CD4-positive, alpha-beta T cell (primary cell): ENCODE measurements at regions of chr15 and their contacts with region 1.

Region 1: GRCh38 chr15:74127260-74127953 is 3.0 kb upstream of the ISLR2 start:
- DNase-seq: peak; percentile 67 to 88 (median 78)
- ATAC-seq: peak; percentile 92
- H3K4me3 ChIP-seq: peak overlapping the region; percentile 7
- H3K4me3 Mint-ChIP-seq: peak overlapping the region; percentile 48
- H3K27ac ChIP-seq: no peak overlapping the region
- H3K27ac Mint-ChIP-seq: no peak overlapping the region
- H3K4me1 ChIP-seq: peaks cover 26% of the 10 kb centered on the region
- H3K4me1 Mint-ChIP-seq: peaks cover 25% of the 10 kb centered on the region
- H3K27me3 ChIP-seq: peaks cover 59 to 64% of the 10 kb centered on the region in 2 experiments
- H3K27me3 Mint-ChIP-seq: peaks cover 95% of the 10 kb centered on the region
- CTCF ChIP-seq: peak; percentile 96

Region 2: GRCh38 chr15:74179341-74179841 is 52.0 kb after region 1 on chr15:
- CTCF ChIA-PET with region 1: no interaction called
- POLR2A ChIA-PET with region 1: no interaction called
- intact Hi-C with region 1: no loop called
- DNase-seq: no peak
- ATAC-seq: no peak
- H3K4me3 ChIP-seq: no peak overlapping the region
- H3K4me3 Mint-ChIP-seq: no peak overlapping the region
- H3K27ac ChIP-seq: no peak overlapping the region
- H3K27ac Mint-ChIP-seq: no peak overlapping the region
- H3K4me1 ChIP-seq: no peaks in the 10 kb centered on the region
- H3K4me1 Mint-ChIP-seq: no peaks in the 10 kb centered on the region
- H3K27me3 ChIP-seq: no peaks in the 10 kb centered on the region
- H3K27me3 Mint-ChIP-seq: no peaks in the 10 kb centered on the region
- CTCF ChIP-seq: no peak

Region 3: GRCh38 chr15:74196179-74196590 is 68.8 kb after region 1 on chr15:
- CTCF ChIA-PET with region 1: no interaction called
- POLR2A ChIA-PET with region 1: no interaction called
- intact Hi-C with region 1: no loop called
- DNase-seq: no peak
- ATAC-seq: no peak
- H3K4me3 ChIP-seq: no peak overlapping the region
- H3K4me3 Mint-ChIP-seq: no peak overlapping the region
- H3K27ac ChIP-seq: no peak overlapping the region
- H3K27ac Mint-ChIP-seq: no peak overlapping the region
- H3K4me1 ChIP-seq: no peaks in the 10 kb centered on the region
- H3K4me1 Mint-ChIP-seq: no peaks in the 10 kb centered on the region
- H3K27me3 ChIP-seq: no peaks in the 10 kb centered on the region
- H3K27me3 Mint-ChIP-seq: peaks cover 4% of the 10 kb centered on the region
- CTCF ChIP-seq: no peak

Region 4: DNA sequence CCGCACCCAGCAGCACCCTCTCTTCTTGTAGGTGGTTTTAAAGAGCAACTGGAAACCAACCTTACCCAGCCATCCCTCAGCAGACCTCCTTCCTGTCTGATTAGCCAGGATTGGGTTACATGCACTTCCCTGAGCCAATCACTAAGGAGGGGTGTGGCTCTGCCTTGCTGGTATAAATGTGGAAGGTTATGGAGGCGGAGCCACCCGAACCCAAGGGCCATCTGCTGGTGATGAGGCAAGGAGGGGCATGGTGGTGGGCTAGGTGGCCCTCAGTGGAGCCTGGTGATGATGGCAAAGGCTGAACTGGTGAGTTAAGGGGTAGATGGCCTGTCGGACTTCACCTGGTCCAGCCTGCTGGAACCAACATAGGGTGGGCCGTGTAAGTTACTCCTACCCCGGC is 148.6 kb after region 1 on chr15:
- CTCF ChIA-PET with region 1: no interaction called
- POLR2A ChIA-PET with region 1: no interaction called
- intact Hi-C with region 1: no loop called
- DNase-seq: no peak
- ATAC-seq: no peak
- H3K4me3 ChIP-seq: no peak overlapping the region
- H3K4me3 Mint-ChIP-seq: no peak overlapping the region
- H3K27ac ChIP-seq: no peak overlapping the region
- H3K27ac Mint-ChIP-seq: no peak overlapping the region
- H3K4me1 ChIP-seq: no peaks in the 10 kb centered on the region
- H3K4me1 Mint-ChIP-seq: no peaks in the 10 kb centered on the region
- H3K27me3 ChIP-seq: peaks cover 0 to 2% of the 10 kb centered on the region in 2 experiments
- H3K27me3 Mint-ChIP-seq: peaks cover 34% of the 10 kb centered on the region
- CTCF ChIP-seq: no peak

Region 5: DNA sequence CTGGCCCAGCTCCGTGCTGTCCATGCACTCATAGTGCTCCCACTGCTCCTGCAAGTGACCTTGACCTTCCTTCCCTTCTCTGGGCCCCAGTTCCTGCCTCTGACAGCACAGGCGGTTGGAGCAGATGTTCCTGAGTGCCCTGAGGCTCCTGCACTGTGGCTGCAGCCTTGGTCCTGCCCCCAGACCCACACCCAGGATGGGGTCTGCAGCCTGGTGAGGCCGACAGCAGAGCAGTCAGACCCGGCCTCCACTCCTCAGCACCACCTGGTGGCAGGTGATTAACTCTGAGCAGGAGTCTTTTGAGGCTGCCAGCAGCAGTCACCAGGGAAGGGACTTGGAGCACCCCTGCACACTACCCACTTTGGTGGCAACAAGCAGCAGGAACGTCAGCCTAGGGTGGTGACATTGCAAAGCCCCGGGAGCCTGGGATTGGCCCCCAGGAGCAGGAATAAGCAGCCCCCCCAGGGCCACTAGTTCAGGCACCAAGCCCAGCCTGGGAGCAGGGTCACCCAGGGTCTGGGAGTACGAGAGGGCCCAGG is 175.5 kb after region 1 on chr15:
- CTCF ChIA-PET with region 1: no interaction called
- POLR2A ChIA-PET with region 1: no interaction called
- intact Hi-C with region 1: loop called (anchors 1 to 5 kb)
- DNase-seq: peak in 10 of 14 experiments; percentile 7 to 44 (median 20)
- ATAC-seq: no peak
- H3K4me3 ChIP-seq: no peak overlapping the region
- H3K4me3 Mint-ChIP-seq: no peak overlapping the region
- H3K27ac ChIP-seq: no peak overlapping the region
- H3K27ac Mint-ChIP-seq: no peak overlapping the region
- H3K4me1 ChIP-seq: no peaks in the 10 kb centered on the region
- H3K4me1 Mint-ChIP-seq: no peaks in the 10 kb centered on the region
- H3K27me3 ChIP-seq: peaks cover 18 to 21% of the 10 kb centered on the region in 2 experiments
- H3K27me3 Mint-ChIP-seq: peaks cover 76% of the 10 kb centered on the region
- CTCF ChIP-seq: peak; percentile 31